Activated T-helper 1 cell treated with anti-CD3 and anti-CD28 coated beads, Interleukin-12 subunit alpha, Interleukin-12 subunit beta, Interleukin-2, Interleukin-4 antibody, amounts not matched to agents 30 ng/mL and 10 ng/mL and 1 ng/mL, durations not matched to agents 14 hours and 24 hours and 36 hours (primary cell): ENCODE measurements at regions of chr12 and their contacts with region 1.

Region 1: GRCh38 chr12:92065018-92065499 is 80.6 kb downstream of the BTG1 start:
- DNase-seq: peak; percentile 31
- H3K4me3 Mint-ChIP-seq: peak overlapping the region; percentile 27
- H3K27ac Mint-ChIP-seq: peak overlapping the region; percentile 69
- H3K4me1 Mint-ChIP-seq: peaks cover 55% of the 10 kb centered on the region
- H3K27me3 Mint-ChIP-seq: no peaks in the 10 kb centered on the region

Region 2: DNA sequence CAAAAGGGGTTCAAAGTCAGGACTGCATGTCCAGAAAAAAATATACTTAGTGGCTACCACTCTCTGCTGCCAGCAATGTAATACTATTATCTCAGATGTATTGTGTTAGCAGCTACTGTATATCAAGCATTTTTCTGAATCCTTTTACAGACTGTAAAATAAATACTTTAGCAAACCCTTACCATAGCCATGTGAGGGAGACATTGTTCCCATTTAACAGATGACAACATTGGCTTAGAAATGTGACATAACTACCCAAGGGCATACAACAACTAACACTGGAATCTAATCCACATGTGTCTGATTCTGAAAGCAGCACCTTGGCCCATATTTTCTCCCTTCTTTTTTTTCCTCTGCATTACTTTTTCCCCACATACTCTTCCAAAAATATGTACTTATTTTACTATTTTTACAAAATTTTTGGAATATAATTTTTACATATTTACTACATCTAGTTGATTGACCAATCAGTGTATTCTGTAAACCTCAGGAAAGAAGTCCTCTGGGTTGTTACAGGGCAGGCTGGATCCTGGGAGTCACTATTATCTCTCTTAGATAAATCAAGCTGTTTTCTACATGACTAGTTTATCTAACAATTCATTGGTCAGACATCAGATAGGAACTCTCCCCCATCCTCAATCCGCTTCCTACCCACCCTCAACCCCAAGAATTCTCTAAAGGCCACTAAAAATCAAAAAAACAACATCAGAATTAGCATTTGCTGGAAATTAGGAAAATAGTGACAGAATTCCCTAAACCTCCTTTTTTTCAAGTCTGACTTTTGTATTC is 73.5 kb before region 1 on chr12:
- intact Hi-C with region 1: loop called (anchors 10 kb)
- DNase-seq: no peak
- H3K4me3 Mint-ChIP-seq: no peak overlapping the region
- H3K27ac Mint-ChIP-seq: no peak overlapping the region
- H3K4me1 Mint-ChIP-seq: peaks cover 4% of the 10 kb centered on the region
- H3K27me3 Mint-ChIP-seq: no peaks in the 10 kb centered on the region

Region 3: GRCh38 chr12:92078167-92079053 is 13.4 kb after region 1 on chr12:
- intact Hi-C with region 1: loop called (anchors 1 kb)
- DNase-seq: no peak
- H3K4me3 Mint-ChIP-seq: no peak overlapping the region
- H3K27ac Mint-ChIP-seq: peak overlapping the region; percentile 45
- H3K4me1 Mint-ChIP-seq: peaks cover 55% of the 10 kb centered on the region
- H3K27me3 Mint-ChIP-seq: no peaks in the 10 kb centered on the region

Region 4: GRCh38 chr12:92094751-92095161 is 29.7 kb after region 1 on chr12:
- intact Hi-C with region 1: no loop called
- DNase-seq: no peak
- H3K4me3 Mint-ChIP-seq: no peak overlapping the region
- H3K27ac Mint-ChIP-seq: no peak overlapping the region
- H3K4me1 Mint-ChIP-seq: peaks cover 15% of the 10 kb centered on the region
- H3K27me3 Mint-ChIP-seq: peaks cover 2% of the 10 kb centered on the region

Region 5: GRCh38 chr12:92208613-92209121 is 143.6 kb after region 1 on chr12:
- intact Hi-C with region 1: loop called (anchors 1 kb)
- DNase-seq: peak; percentile 26
- H3K4me3 Mint-ChIP-seq: peak overlapping the region; percentile 72
- H3K27ac Mint-ChIP-seq: peak overlapping the region; percentile 94
- H3K4me1 Mint-ChIP-seq: peaks cover 46% of the 10 kb centered on the region
- H3K27me3 Mint-ChIP-seq: no peaks in the 10 kb centered on the region

Region 6: DNA sequence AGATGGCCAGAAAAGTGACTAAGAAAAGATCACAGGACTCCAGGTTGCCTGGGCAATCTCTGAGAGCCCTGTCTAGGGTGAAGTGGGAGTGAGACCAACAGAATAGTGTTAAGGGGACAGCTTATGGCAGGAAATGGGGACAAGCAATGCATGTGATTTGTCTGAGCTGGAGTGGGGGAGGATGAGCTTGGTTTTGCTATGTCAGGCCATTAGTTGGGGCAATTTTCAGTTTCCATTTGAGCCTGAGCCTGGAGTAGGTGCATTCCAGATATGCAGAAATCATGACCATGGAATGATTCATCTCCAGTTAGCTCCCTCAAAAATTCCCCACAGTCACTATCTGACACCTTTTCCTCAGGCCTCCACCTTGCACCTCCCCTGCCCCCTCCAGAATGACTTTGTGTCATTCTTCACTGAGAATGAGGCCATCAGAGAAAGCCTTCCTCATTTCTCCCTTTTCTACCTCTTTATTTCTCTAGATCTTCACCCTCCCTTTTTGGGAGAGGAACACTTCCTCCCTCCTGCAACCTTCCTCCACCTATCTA is 486.9 kb after region 1 on chr12:
- intact Hi-C with region 1: loop called (anchors 1 kb)
- DNase-seq: no peak
- H3K4me3 Mint-ChIP-seq: no peak overlapping the region
- H3K27ac Mint-ChIP-seq: no peak overlapping the region
- H3K4me1 Mint-ChIP-seq: peaks cover 31% of the 10 kb centered on the region
- H3K27me3 Mint-ChIP-seq: no peaks in the 10 kb centered on the region